HEK293 (cell line): ENCODE measurements at regions of chr18 and their contacts with region 1.

Region 1: GRCh38 chr18:9136315-9137155 is at the start of gene ANKRD12:
- H3K4me3 ChIP-seq: peak within 1 kb of the TSS; percentile 99
- H3K27ac ChIP-seq: peak within 1 kb of the TSS; percentile 84
- H3K4me1 ChIP-seq: peaks cover 21% of the 10 kb centered on the region
- CTCF ChIP-seq: no peak

Region 2: DNA sequence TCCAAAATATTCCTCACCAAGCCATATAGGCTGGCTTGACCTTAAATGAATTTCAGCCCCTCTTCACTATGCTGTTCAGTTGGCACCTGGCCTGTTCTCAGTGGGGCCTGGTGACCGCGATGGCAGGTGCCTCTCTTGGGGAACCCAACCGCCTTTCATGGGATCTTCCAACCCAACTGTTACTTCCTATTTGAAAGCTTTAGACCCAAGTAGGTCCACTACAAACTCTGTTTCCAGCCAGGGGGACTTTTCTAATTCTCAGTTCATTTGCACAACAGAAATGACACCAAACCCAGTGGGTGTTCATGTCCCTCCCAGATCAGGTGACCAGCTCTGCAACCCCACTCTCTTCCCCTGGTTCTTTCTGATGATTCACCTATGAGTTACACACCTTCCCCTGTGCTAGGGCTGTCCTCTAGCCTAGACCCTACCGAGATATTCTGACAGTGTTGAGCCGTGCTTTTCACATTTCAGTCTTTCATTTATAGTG is 69.7 kb before region 1 on chr18:
- CTCF ChIA-PET with region 1: interaction called, 26 read pairs
- POLR2A ChIA-PET with region 1: no interaction called
- H3K4me3 ChIP-seq: no peak overlapping the region
- H3K27ac ChIP-seq: no peak overlapping the region
- H3K4me1 ChIP-seq: no peaks in the 10 kb centered on the region
- CTCF ChIP-seq: no peak

Region 3: DNA sequence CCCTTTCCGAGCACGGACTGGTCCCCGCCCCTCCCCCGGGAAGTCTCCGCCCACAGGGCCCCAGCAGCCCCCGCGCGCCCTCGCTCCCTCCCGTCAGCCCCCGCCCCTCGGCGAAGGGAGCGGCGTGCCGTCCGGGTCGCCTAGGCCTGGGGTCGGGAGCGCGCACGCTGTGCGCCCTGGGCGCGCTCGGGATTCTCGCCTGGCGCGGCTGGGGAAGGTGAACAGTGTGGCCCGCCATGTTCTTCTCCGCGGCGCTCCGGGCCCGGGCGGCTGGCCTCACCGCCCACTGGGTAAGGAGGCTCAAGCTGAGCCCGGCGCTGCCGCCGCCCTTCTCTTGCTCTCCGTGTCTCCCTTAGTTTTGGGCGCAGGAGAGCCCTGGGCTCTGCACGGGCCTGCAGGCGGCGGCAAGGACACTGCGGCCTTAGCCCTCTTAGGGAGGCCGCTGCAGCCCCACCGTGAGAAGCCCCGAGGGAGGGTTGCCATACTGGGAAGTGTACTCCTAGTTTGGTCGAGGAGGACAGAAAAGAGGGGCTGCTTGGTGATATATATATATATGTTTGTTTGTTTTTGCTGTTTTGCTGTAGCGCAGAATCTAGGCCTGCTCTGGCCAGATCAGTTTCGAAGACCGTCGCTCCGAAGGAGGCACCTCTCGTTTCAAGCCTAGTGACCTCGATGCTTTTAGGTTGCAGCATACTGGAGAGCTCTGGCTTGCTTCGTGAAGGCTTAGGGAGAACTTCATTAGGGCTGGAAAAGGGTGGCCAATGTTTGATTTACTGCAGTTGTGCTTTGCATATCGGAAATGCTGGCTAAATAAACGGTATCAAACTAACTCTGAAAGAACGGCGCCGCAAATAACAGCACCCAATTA is 33.8 kb before region 1 on chr18 and contains the start of gene NDUFV2:
- CTCF ChIA-PET with region 1: interaction called, 4 read pairs
- POLR2A ChIA-PET with region 1: interaction called, 29 read pairs
- H3K4me3 ChIP-seq: peak within 1 kb of the TSS; percentile 56
- H3K27ac ChIP-seq: peak within 1 kb of the TSS; percentile 86
- H3K4me1 ChIP-seq: peaks cover 32% of the 10 kb centered on the region; the same call in 1 of the 2 replicates
- CTCF ChIP-seq: peak; percentile 40; the same call in 1 of the 2 replicates

Region 4: DNA sequence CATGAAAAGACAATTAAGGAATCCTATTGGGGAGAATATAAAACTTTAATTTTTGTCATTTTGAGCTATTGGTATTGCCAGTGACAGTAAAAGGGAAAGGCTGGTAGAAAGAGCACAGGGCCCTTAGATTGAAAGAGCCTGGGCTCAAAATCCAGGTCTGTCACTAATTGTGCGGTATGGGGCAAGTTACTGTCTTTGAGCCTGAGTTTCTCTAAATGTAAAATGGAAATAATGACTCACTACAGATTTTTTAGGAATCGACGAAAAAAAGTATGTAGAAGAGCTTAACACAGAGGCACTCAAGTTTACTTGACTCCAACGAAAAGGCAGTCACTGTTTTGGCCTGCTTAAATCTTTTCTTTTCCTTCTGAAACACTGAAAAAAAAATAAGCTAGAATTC is 27.0 kb before region 1 on chr18:
- CTCF ChIA-PET with region 1: interaction called, 4 read pairs
- POLR2A ChIA-PET with region 1: interaction called, 29 read pairs
- H3K4me3 ChIP-seq: no peak overlapping the region
- H3K27ac ChIP-seq: no peak overlapping the region
- H3K4me1 ChIP-seq: peaks cover 35% of the 10 kb centered on the region; the same call in 1 of the 2 replicates
- CTCF ChIP-seq: no peak

Region 5: GRCh38 chr18:9117980-9118841 is 18.3 kb before region 1 on chr18:
- CTCF ChIA-PET with region 1: no interaction called
- POLR2A ChIA-PET with region 1: interaction called, 11 read pairs
- H3K4me3 ChIP-seq: no peak overlapping the region
- H3K27ac ChIP-seq: no peak overlapping the region
- H3K4me1 ChIP-seq: peaks cover 3% of the 10 kb centered on the region; the same call in 1 of the 2 replicates
- CTCF ChIP-seq: no peak

Region 6: GRCh38 chr18:9217743-9218451 is 81.4 kb after region 1 on chr18:
- CTCF ChIA-PET with region 1: no interaction called
- POLR2A ChIA-PET with region 1: no interaction called
- H3K4me3 ChIP-seq: no peak overlapping the region
- H3K27ac ChIP-seq: no peak overlapping the region
- H3K4me1 ChIP-seq: no peaks in the 10 kb centered on the region
- CTCF ChIP-seq: no peak

Region 7: GRCh38 chr18:9561759-9562158 is 425.2 kb after region 1 on chr18:
- CTCF ChIA-PET with region 1: no interaction called
- POLR2A ChIA-PET with region 1: no interaction called
- H3K4me3 ChIP-seq: no peak overlapping the region
- H3K27ac ChIP-seq: no peak overlapping the region
- H3K4me1 ChIP-seq: no peaks in the 10 kb centered on the region
- CTCF ChIP-seq: no peak